B cell (primary cell): ENCODE measurements at regions of chr3 and their contacts with region 1.

Region 1: DNA sequence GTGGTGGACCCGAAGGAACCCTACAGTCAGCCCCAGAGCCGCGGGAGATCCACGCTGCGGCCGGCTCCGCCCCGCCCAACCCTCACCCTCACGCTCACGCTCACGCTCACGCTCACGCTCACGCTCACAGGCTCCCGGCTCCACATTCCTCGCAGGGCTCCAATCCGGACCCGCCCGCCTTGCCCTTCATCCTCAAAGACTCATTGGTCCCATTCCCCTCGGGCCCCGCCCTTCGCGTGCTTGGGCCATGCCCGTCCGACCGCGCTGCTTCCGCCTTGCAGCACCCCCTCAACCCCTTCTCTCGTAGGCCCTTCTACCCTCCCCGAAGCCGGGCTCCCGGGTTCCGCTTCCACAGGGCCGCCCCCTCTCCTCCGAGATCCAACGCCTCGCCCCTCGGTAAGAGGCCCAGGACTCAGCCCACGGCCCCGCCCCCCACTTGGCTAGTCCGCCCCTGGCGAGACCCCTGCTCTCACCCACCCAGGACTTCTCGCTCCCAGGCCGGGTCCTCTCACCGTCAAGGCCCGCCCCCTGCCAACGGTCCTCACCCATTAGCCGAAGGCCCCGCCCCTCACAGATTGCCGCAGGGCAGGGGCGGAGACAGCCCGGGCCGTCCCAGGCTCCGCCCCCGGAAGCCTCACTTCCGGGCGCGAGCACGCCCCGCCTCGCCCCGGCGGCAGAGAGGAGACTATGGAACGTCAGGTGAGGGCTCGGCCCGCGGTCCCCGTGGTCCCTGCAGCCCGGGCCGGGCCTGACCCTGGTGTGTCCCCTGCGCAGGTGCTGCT is at the start of gene APEH:
- DNase-seq: peak; percentile 98
- ATAC-seq: peak; percentile 88
- H3K4me3 ChIP-seq: peak within 1 kb of the TSS; percentile 51 to 84 (median 73)
- H3K4me3 Mint-ChIP-seq: peak within 1 kb of the TSS; percentile 99
- H3K27ac ChIP-seq: peak within 1 kb of the TSS; percentile 86 to 94
- H3K27ac Mint-ChIP-seq: peak within 1 kb of the TSS; percentile 98
- H3K4me1 ChIP-seq: peaks cover 13 to 18% of the 10 kb centered on the region in 2 donors
- H3K4me1 Mint-ChIP-seq: peaks cover 30% of the 10 kb centered on the region
- H3K27me3 ChIP-seq: no peaks in the 10 kb centered on the region
- H3K27me3 Mint-ChIP-seq: no peaks in the 10 kb centered on the region
- CTCF ChIP-seq: no peak
- total RNA-seq, gene APEH: 87.5 and 96.2 TPM in 2 replicates

Region 2: GRCh38 chr3:49411968-49412631 is 261.8 kb before region 1 on chr3 and contains the starts of genes RHOA and TCTA:
- CTCF ChIA-PET with region 1: interaction called, 5 read pairs
- POLR2A ChIA-PET with region 1: no interaction called
- intact Hi-C with region 1: loop called (anchors 5 kb)
- DNase-seq: peak; percentile 100
- ATAC-seq: peak; percentile 77
- H3K4me3 ChIP-seq: peak within 1 kb of the TSS; percentile 74 to 96 (median 90)
- H3K4me3 Mint-ChIP-seq: peak within 1 kb of the TSS; percentile 96
- H3K27ac ChIP-seq: peak within 1 kb of the TSS; percentile 90 to 97
- H3K27ac Mint-ChIP-seq: peak within 1 kb of the TSS; percentile 96
- H3K4me1 ChIP-seq: peaks cover 71 to 83% of the 10 kb centered on the region in 2 donors
- H3K4me1 Mint-ChIP-seq: peaks cover 74% of the 10 kb centered on the region
- H3K27me3 ChIP-seq: no peaks in the 10 kb centered on the region
- H3K27me3 Mint-ChIP-seq: no peaks in the 10 kb centered on the region
- CTCF ChIP-seq: no peak
- total RNA-seq, gene RHOA: 298 and 306 TPM in 2 replicates
- total RNA-seq, gene TCTA: 46.4 and 49.3 TPM in 2 replicates

Region 3: GRCh38 chr3:49539659-49540560 is 134.0 kb before region 1 on chr3:
- CTCF ChIA-PET with region 1: interaction called, 161 read pairs
- POLR2A ChIA-PET with region 1: no interaction called
- intact Hi-C with region 1: no loop called
- DNase-seq: peak; percentile 93
- ATAC-seq: peak; percentile 94
- H3K4me3 ChIP-seq: peak overlapping the region; percentile 19 to 82 (median 63)
- H3K4me3 Mint-ChIP-seq: peak overlapping the region; percentile 84
- H3K27ac ChIP-seq: peak overlapping the region; percentile 16 to 63
- H3K27ac Mint-ChIP-seq: peak overlapping the region; percentile 68
- H3K4me1 ChIP-seq: peaks cover 0 to 6% of the 10 kb centered on the region in 2 donors
- H3K4me1 Mint-ChIP-seq: peaks cover 7% of the 10 kb centered on the region
- H3K27me3 ChIP-seq: peaks cover 0 to 4% (median 0%) of the 10 kb centered on the region in 4 experiments
- H3K27me3 Mint-ChIP-seq: peaks cover 19% of the 10 kb centered on the region
- CTCF ChIP-seq: peak; percentile 92

Region 4: DNA sequence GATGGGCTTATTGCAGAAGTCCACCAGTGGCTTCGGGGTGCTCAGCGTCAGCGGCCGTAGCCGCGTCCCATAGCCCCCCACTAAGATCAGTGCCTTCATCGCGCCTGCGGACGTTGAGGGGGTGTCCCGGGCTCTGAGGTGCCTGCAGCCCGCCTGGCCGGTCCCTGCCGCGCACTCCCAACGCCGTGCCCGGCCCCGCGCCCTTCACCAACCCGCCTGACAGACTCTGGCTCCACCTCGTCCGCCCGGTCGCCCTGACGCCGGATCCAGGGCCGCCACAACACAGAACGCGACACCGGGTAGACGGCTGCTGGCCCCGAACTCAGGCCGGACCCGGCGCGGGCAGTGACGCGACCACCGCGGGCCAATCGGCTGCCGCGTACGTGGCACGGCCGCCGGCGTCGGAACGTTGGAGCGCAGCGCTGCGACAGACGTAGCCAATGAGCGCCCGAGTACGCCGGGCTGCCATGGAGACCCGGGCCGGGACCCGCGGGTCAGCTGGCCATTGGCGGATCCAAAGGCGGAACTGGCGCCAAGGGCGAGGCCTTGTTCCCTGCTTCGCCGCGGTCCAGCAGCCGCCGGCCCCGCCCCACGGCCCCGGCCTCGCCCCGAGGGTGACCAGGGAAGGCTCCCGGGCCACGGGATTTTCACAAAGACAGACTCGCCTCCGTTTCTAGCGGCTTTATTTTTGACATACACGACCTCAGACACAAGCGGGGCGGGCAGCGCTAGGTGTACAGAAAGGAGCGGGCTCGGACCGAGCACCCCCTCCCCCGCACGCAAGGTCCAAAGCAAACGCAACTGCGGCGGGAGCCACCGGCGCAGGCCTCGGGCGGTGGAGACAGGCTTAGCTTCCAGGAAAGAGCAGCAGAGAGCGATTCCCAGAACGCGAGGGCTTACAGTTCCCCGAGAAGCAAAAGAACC is 50.0 kb after region 1 on chr3 and contains the start of gene GMPPB:
- CTCF ChIA-PET with region 1: interaction called, 3 read pairs
- POLR2A ChIA-PET with region 1: no interaction called
- intact Hi-C with region 1: loop called (anchors 1 kb)
- DNase-seq: peak; percentile 97
- ATAC-seq: peak; percentile 78
- H3K4me3 ChIP-seq: peak within 1 kb of the TSS; percentile 63 to 99 (median 92)
- H3K4me3 Mint-ChIP-seq: peak within 1 kb of the TSS; percentile 96
- H3K27ac ChIP-seq: peak within 1 kb of the TSS; percentile 100
- H3K27ac Mint-ChIP-seq: peak within 1 kb of the TSS; percentile 97
- H3K4me1 ChIP-seq: peaks cover 27 to 59% of the 10 kb centered on the region in 2 donors
- H3K4me1 Mint-ChIP-seq: peaks cover 59% of the 10 kb centered on the region
- H3K27me3 ChIP-seq: no peaks in the 10 kb centered on the region
- H3K27me3 Mint-ChIP-seq: no peaks in the 10 kb centered on the region
- CTCF ChIP-seq: no peak
- total RNA-seq, gene GMPPB: 30.0 and 31.4 TPM in 2 replicates

Region 5: DNA sequence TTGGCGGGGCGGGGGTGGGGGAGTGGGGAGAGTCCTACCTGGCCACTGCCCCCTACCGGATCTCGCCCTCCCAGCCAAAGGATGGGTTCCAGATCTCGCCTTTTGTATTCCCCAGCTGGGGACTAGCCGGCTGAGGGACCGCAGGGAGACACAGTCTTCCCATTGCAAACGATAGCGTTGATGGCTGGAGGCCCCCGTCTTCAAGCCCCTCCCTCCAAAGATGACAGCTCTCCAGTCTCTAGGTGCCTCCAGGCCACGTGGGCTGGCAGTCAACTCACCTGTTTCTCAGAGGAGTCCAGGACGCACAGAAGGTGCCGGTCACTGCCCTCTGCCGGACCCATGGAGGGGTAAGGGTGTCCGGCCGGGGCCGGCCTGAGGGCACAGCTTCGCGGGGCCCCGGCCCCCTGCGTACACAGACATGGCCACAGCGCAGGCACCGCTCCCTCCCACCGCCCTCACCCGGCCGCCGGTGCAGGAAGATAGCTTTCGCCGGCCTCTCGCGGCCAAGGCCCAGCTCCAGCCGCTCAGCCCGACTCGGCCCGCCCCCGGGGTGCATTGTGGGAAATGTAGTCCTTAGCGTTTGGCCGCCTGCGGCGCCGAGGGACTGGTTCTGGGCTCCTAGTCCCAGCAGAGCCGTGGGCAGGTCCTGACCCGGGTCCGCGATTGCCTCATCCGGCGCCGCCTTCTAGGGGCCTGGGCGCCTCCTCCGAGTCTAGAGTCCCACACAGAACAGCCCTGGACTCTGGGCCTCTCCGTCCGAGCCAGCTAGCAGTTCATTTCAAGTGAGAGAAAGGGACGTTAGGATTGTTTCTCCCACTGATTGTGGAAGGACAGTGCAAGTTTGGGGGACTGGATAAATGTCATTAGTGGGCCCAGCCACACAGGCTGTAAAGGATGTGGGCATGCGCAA is 255.7 kb after region 1 on chr3 and contains the start of gene MON1A:
- CTCF ChIA-PET with region 1: no interaction called
- POLR2A ChIA-PET with region 1: no interaction called
- intact Hi-C with region 1: loop called (anchors 2 kb)
- DNase-seq: peak; percentile 86
- ATAC-seq: peak; percentile 93
- H3K4me3 ChIP-seq: peak within 1 kb of the TSS; percentile 63 to 96 (median 92)
- H3K4me3 Mint-ChIP-seq: peak within 1 kb of the TSS; percentile 85
- H3K27ac ChIP-seq: peak within 1 kb of the TSS; percentile 70 to 89
- H3K27ac Mint-ChIP-seq: peak within 1 kb of the TSS; percentile 81
- H3K4me1 ChIP-seq: peaks cover 8 to 17% of the 10 kb centered on the region in 2 donors
- H3K4me1 Mint-ChIP-seq: peaks cover 11% of the 10 kb centered on the region
- H3K27me3 ChIP-seq: no peaks in the 10 kb centered on the region
- H3K27me3 Mint-ChIP-seq: no peaks in the 10 kb centered on the region
- CTCF ChIP-seq: peak; percentile 35
- total RNA-seq, gene MON1A: 5.6 and 6.6 TPM in 2 replicates

Region 6: DNA sequence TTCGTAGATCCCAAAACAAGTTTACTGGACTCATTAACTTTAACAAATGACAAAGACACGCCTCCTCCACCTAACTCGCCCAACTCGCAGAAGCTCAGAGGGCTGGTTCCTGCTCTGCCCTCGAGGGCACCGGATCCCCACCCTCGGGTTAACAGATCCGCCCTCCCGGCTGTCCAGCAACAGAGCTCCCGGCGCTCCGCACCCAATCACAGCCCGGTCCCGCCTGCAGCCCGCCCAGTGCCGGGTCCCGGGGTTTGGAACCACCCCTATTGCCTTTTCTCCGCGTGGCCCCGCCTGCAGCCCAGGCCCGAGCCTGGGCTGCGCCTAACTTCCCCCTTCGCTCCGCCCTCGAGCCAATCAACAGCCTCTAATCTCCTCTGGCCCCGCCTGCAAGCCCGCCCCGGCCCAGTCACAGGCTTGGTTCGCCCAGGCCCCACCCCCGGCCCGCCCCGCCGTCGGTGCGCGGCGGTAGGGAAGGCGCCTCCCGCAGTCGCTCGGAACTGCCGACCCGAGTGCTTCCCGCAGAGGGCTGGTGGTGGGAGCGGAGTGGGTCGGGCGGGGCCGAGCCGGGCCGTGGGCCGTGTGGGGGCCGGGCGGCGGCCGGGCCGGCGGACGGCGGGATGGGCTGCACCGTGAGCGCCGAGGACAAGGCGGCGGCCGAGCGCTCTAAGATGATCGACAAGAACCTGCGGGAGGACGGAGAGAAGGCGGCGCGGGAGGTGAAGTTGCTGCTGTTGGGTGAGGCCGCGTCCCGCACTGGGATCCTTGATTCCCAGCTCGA is 562.0 kb after region 1 on chr3 and contains the start of gene GNAI2:
- CTCF ChIA-PET with region 1: no interaction called
- POLR2A ChIA-PET with region 1: no interaction called
- intact Hi-C with region 1: loop called (anchors 5 kb)
- DNase-seq: peak; percentile 99
- ATAC-seq: peak; percentile 88
- H3K4me3 ChIP-seq: peak within 1 kb of the TSS; percentile 70 to 100 (median 95)
- H3K4me3 Mint-ChIP-seq: peak within 1 kb of the TSS; percentile 97
- H3K27ac ChIP-seq: peak within 1 kb of the TSS; percentile 65 to 91
- H3K27ac Mint-ChIP-seq: peak within 1 kb of the TSS; percentile 97
- H3K4me1 ChIP-seq: peaks cover 39 to 46% of the 10 kb centered on the region in 2 donors
- H3K4me1 Mint-ChIP-seq: peaks cover 54% of the 10 kb centered on the region
- H3K27me3 ChIP-seq: no peaks in the 10 kb centered on the region
- H3K27me3 Mint-ChIP-seq: no peaks in the 10 kb centered on the region
- CTCF ChIP-seq: no peak
- total RNA-seq, gene GNAI2: 295 and 302 TPM in 2 replicates